Activated B cell treated with CpG ODN at 0.5 μM for 24 hours (primary cell): ENCODE measurements at regions of chr4 and their contacts with region 1.

Region 1: GRCh38 chr4:99855678-99856077 is 38.5 kb downstream of the LAMTOR3 start:
- DNase-seq: no peak
- ATAC-seq: peak; percentile 59
- H3K4me3 Mint-ChIP-seq: peak overlapping the region; percentile 33
- H3K27ac Mint-ChIP-seq: peak overlapping the region; percentile 90
- H3K4me1 Mint-ChIP-seq: peaks cover 80% of the 10 kb centered on the region
- H3K27me3 Mint-ChIP-seq: no peaks in the 10 kb centered on the region
- CTCF ChIP-seq: no peak

Region 2: DNA sequence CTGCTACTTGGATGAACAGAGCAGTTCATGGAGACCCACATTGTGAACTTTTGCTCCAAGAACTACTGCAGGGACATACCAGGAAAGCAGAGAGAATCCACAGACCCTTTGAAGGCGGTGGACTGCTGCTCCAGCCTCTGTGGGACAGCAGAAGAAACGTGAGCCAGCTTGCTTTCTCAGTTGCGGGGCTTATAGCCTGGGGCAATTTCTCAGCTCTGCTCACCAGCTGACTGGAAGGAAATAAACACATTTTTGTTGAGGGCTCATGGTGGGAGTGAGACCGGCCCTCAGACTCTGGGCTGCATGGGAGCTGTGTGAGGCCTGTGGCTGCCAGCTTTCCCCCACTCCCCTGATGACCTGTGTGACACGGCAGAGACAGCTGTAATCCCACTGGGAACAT is 562.3 kb before region 1 on chr4:
- CTCF ChIA-PET with region 1: no interaction called
- POLR2A ChIA-PET with region 1: no interaction called
- intact Hi-C with region 1: no loop called
- DNase-seq: no peak
- ATAC-seq: no peak
- H3K4me3 Mint-ChIP-seq: no peak overlapping the region
- H3K27ac Mint-ChIP-seq: no peak overlapping the region
- H3K4me1 Mint-ChIP-seq: no peaks in the 10 kb centered on the region
- H3K27me3 Mint-ChIP-seq: no peaks in the 10 kb centered on the region
- CTCF ChIP-seq: no peak

Region 3: DNA sequence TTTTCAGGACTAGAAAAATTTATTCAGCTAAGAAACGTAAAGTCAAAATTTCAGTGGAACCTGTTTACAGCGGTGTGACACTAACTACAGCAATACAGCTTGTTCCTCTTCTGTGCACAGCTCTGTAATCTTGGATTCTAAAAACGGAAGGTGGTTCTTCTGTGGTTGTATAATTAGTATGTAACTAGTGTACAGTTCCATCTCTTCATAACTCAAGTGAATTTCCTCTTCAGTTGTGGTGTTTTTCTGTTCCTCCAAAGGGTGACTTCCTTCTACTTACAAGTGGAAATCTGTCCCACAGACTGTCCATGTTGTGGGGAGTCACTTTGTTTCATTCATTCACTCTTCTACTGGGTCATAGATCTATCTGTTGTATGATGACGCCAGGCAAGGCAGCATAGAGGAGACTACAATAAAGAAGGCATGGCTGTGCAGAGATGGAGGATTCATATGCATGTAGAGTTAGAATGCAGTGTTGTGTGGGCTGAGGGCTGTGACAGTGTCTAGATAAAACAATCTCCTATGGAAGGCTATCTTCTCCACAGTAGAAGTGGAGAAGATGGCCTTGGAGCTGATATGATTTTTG is 33.7 kb before region 1 on chr4:
- CTCF ChIA-PET with region 1: interaction called, 4 read pairs
- POLR2A ChIA-PET with region 1: interaction called, 73 read pairs
- intact Hi-C with region 1: loop called (anchors 1 kb)
- DNase-seq: no peak
- ATAC-seq: peak; percentile 77
- H3K4me3 Mint-ChIP-seq: peak overlapping the region; percentile 81
- H3K27ac Mint-ChIP-seq: peak overlapping the region; percentile 94
- H3K4me1 Mint-ChIP-seq: peaks cover 91% of the 10 kb centered on the region
- H3K27me3 Mint-ChIP-seq: no peaks in the 10 kb centered on the region
- CTCF ChIP-seq: no peak

Region 4: GRCh38 chr4:99894161-99894997 is 38.7 kb after region 1 on chr4 and contains the start of gene LAMTOR3:
- CTCF ChIA-PET with region 1: no interaction called
- POLR2A ChIA-PET with region 1: no interaction called
- intact Hi-C with region 1: loop called (anchors 5 kb)
- DNase-seq: peak; percentile 78
- ATAC-seq: peak; percentile 98
- H3K4me3 Mint-ChIP-seq: peak within 1 kb of the TSS; percentile 94
- H3K27ac Mint-ChIP-seq: peak within 1 kb of the TSS; percentile 90
- H3K4me1 Mint-ChIP-seq: peaks cover 26% of the 10 kb centered on the region
- H3K27me3 Mint-ChIP-seq: no peaks in the 10 kb centered on the region
- CTCF ChIP-seq: no peak
- total RNA-seq, gene LAMTOR3: 21.9 and 23.8 TPM in 2 replicates

Region 5: DNA sequence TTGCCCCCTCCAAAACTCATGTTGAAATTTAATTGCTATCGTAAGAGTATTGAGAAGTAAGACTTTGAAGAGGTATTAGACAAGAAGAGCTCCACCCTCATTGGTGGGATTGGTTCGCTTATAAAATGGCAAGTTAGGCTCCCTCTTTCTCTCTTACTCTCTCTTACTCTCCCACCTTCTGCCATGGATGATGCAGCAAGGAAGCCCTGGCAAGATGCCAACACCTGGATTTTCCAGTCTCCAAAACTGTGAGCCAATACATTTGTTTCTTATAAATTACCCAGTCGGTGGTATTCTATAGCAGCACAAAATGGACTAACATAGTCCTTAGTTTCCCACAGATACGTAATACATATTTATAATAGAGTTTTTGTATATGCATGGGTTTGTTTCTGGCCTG is 215.2 kb after region 1 on chr4:
- CTCF ChIA-PET with region 1: no interaction called
- POLR2A ChIA-PET with region 1: no interaction called
- intact Hi-C with region 1: no loop called
- DNase-seq: no peak
- ATAC-seq: no peak
- H3K4me3 Mint-ChIP-seq: no peak overlapping the region
- H3K27ac Mint-ChIP-seq: no peak overlapping the region
- H3K4me1 Mint-ChIP-seq: no peaks in the 10 kb centered on the region
- H3K27me3 Mint-ChIP-seq: peaks cover 16% of the 10 kb centered on the region
- CTCF ChIP-seq: no peak